Naive thymus-derived CD4-positive, alpha-beta T cell (primary cell): ENCODE measurements at regions of chr2 and their contacts with region 1.

Region 1: GRCh38 chr2:17122887-17123501 is 395.2 kb downstream of the RAD51AP2 start:
- DNase-seq: no peak
- ATAC-seq: peak; percentile 38
- H3K4me3 ChIP-seq: no peak overlapping the region
- H3K4me3 Mint-ChIP-seq: no peak overlapping the region
- H3K27ac ChIP-seq: no peak overlapping the region
- H3K27ac Mint-ChIP-seq: no peak overlapping the region
- H3K4me1 ChIP-seq: no peaks in the 10 kb centered on the region
- H3K4me1 Mint-ChIP-seq: no peaks in the 10 kb centered on the region
- H3K27me3 ChIP-seq: no peaks in the 10 kb centered on the region
- H3K27me3 Mint-ChIP-seq: peaks cover 0 to 5% (median 0%) of the 10 kb centered on the region in 5 donors

Region 2: DNA sequence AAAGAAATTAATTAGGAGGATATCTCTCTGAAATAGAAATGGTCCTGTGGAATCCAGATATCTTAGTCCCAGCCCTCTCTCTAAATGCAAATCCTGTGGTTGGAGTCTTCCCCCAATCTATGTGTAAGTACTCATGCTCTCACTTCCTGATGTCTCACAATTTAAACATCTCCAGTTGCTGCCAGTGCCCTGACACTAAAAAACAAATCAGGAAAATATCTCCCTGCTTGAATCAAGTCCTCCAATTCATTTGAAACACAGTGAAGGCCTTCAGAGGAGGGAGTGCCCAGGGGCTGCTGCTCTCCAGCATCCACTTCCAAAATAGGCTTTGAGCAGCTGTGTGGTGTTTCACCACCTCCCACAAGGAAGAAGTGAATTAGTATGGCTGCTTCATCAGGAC is 18.5 kb before region 1 on chr2:
- CTCF ChIA-PET with region 1: no interaction called
- POLR2A ChIA-PET with region 1: no interaction called
- intact Hi-C with region 1: loop called in 1 of 2 experiments (anchors 1 kb)
- DNase-seq: no peak
- ATAC-seq: no peak
- H3K4me3 ChIP-seq: no peak overlapping the region
- H3K4me3 Mint-ChIP-seq: no peak overlapping the region
- H3K27ac ChIP-seq: no peak overlapping the region
- H3K27ac Mint-ChIP-seq: no peak overlapping the region
- H3K4me1 ChIP-seq: no peaks in the 10 kb centered on the region
- H3K4me1 Mint-ChIP-seq: no peaks in the 10 kb centered on the region
- H3K27me3 ChIP-seq: no peaks in the 10 kb centered on the region
- H3K27me3 Mint-ChIP-seq: peaks cover 0 to 7% (median 0%) of the 10 kb centered on the region in 5 donors

Region 3: DNA sequence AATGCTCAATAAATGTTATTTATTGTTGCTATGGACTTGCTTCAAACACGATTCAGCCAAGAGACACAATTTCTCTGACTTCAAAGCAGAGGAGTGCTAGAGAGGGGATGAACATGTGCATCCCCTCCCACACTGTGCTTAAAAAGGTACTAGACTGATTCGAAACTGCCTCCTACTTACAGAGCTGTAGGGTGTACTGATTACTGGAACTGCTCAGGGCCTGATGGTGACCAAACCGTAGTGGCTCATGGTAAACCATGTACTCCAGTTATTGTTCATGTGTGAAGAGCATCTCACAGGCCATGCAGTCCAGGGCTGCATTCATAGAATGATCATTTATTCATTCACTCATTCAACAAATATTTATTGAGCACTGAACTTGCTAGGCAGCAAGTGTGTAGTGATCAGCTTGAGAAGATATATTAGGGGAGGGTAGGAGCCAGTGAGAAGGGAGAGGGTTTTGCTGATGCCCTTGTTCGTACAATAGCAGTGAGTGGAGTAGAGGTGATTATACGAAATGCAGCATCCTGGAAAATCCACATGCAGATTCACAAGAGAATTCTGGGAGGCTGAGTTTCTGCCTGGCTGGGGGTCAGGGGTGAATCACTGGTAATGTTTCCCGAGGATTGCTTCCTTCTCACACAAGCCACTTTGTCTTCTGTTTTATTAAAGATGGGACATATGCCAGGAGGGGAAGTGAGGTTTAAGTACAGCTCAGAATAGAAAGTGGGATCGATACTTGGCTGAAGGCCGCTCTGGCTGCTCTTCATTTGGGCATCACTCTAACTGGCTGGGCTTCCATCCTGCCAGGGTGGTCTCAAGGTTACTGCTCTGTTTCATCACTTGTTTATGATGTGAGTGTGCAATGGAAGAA is 149.9 kb after region 1 on chr2:
- CTCF ChIA-PET with region 1: no interaction called
- POLR2A ChIA-PET with region 1: no interaction called
- intact Hi-C with region 1: no loop called
- DNase-seq: no peak
- ATAC-seq: no peak
- H3K4me3 ChIP-seq: no peak overlapping the region
- H3K4me3 Mint-ChIP-seq: no peak overlapping the region
- H3K27ac ChIP-seq: no peak overlapping the region
- H3K27ac Mint-ChIP-seq: no peak overlapping the region
- H3K4me1 ChIP-seq: no peaks in the 10 kb centered on the region
- H3K4me1 Mint-ChIP-seq: no peaks in the 10 kb centered on the region
- H3K27me3 ChIP-seq: no peaks in the 10 kb centered on the region
- H3K27me3 Mint-ChIP-seq: no peaks in the 10 kb centered on the region

Region 4: DNA sequence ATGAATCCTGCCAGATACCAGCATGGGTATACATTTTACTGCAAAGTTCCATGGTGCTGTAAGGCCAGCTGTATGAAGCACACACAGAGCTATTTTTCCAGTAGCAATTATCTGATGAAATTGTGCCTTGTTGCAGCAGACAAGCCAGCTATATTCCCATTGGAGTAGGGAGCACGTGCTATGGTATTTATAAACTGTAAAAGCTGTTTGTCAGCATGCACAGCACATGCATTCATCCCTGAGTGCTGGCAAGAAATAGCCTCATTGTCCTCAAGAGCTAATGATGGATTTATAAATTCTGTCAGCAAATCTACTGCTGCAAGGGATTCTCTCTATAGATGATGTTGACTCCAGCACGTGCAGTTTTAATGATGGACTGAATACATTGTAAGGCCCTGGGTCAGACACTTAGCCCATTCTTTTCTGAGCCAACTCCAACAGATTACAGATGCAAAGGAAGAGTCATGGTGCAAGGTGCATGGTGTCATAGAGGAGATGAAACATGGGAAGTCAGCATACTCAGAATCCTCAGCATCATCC is 817.2 kb after region 1 on chr2:
- CTCF ChIA-PET with region 1: no interaction called
- POLR2A ChIA-PET with region 1: no interaction called
- intact Hi-C with region 1: loop called in 1 of 2 experiments (anchors 5 kb)
- DNase-seq: no peak
- ATAC-seq: no peak
- H3K4me3 ChIP-seq: no peak overlapping the region
- H3K4me3 Mint-ChIP-seq: no peak overlapping the region
- H3K27ac ChIP-seq: no peak overlapping the region
- H3K27ac Mint-ChIP-seq: no peak overlapping the region
- H3K4me1 ChIP-seq: no peaks in the 10 kb centered on the region
- H3K4me1 Mint-ChIP-seq: no peaks in the 10 kb centered on the region
- H3K27me3 ChIP-seq: no peaks in the 10 kb centered on the region
- H3K27me3 Mint-ChIP-seq: peaks cover 0 to 42% (median 6%) of the 10 kb centered on the region in 5 donors